Endothelial cell of umbilical vein (primary cell): ENCODE measurements at regions of chr17 and their contacts with region 1.

Region 1: DNA sequence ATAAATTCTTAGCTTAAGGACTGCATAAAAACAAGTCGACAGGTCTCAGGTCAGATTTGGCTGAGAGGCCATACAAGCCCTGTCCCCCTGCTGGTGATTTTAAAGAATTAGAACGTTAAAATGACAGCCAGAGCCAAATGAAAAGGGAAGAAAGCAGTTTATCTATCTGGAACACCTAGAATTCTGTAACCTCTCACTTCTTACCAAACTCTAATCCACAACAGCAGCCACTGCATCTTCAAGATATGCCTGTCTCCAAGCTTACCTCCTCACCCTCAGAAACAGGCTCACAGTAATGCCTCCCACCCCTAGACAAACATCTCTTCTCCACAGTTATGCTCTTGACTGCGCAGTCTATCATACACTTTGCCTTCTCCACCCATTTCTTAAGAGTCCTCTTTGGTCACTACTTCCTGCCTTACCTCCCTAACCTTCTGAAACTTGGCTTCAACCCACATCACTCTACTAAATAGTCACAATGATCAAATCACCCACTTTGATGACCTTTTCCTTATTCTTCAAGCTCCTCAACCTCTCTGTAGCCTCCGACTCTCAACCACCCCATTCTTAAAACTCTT is 14.2 kb downstream of the ANKFY1 start:
- DNase-seq: peak; percentile 26
- H3K4me3 ChIP-seq: no peak overlapping the region
- H3K27ac ChIP-seq: no peak overlapping the region
- H3K4me1 ChIP-seq: no peaks in the 10 kb centered on the region
- H3K27me3 ChIP-seq: no peaks in the 10 kb centered on the region
- CTCF ChIP-seq: peak; percentile 36 to 53
- POLR2A ChIP-seq: no peak

Region 2: GRCh38 chr17:4130715-4131114 is 118.8 kb before region 1 on chr17:
- CTCF ChIA-PET with region 1: no interaction called
- POLR2A ChIA-PET with region 1: no interaction called
- dilution Hi-C with region 1: no loop called
- intact Hi-C with region 1: no loop called
- DNase-seq: peak; percentile 56
- H3K4me3 ChIP-seq: no peak overlapping the region
- H3K27ac ChIP-seq: no peak overlapping the region
- H3K4me1 ChIP-seq: peaks cover 14% of the 10 kb centered on the region
- H3K27me3 ChIP-seq: no peaks in the 10 kb centered on the region
- CTCF ChIP-seq: no peak
- POLR2A ChIP-seq: peak; percentile 28

Region 3: DNA sequence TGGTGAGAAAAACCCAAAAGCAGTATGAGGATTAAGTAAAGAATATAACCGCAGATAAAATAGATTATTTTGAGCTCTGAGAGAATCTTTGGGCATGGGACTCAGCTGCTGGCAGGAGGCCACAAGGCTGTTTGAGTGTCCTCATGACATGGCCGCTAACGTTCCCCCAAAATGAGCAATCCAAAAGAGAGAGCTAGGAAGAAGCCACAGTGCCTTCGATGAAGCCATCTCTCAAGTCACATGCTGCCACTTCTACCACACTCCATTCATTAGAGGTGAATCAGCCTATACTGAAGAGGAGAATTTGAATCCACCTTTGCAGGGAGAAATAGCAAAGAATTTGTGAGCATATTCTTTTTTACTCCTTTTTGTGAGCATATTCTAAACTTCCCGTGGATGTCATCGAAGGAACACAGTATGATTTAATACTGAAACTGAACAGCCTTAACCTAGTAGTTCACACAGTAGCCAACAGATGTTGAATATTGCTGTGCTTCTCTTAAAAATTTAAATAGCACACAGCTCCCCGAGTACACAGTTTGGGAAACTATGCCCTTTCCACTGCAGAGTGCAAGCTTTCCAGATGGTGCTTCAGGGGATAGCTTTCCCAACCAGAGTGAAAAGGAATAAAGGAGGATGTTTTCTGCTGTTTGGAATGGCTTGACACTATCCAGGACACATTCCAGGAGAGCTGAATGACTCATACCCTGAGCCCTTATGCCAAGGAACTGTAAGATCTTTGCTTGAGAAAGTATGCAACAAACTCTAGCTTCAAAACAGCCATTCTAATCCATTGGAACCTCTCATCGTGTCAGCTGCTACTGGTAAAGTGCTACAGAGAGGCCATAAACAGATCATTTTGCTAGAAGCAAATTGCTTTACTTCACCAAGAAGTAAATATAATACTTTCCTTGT is 19.7 kb before region 1 on chr17:
- CTCF ChIA-PET with region 1: interaction called, 24 read pairs
- POLR2A ChIA-PET with region 1: no interaction called
- dilution Hi-C with region 1: no loop called
- intact Hi-C with region 1: no loop called
- DNase-seq: peak; percentile 93
- H3K4me3 ChIP-seq: no peak overlapping the region
- H3K27ac ChIP-seq: no peak overlapping the region
- H3K4me1 ChIP-seq: peaks cover 17% of the 10 kb centered on the region
- H3K27me3 ChIP-seq: no peaks in the 10 kb centered on the region
- CTCF ChIP-seq: no peak
- POLR2A ChIP-seq: no peak

Region 4: GRCh38 chr17:4263282-4264215 is 14.0 kb after region 1 on chr17 and contains the start of gene ANKFY1:
- CTCF ChIA-PET with region 1: interaction called, 21 read pairs
- POLR2A ChIA-PET with region 1: no interaction called
- dilution Hi-C with region 1: no loop called
- intact Hi-C with region 1: no loop called
- DNase-seq: peak; percentile 97
- H3K4me3 ChIP-seq: peak within 1 kb of the TSS; percentile 69 to 97 (median 70)
- H3K27ac ChIP-seq: peak within 1 kb of the TSS; percentile 72
- H3K4me1 ChIP-seq: peaks cover 16% of the 10 kb centered on the region
- H3K27me3 ChIP-seq: no peaks in the 10 kb centered on the region
- CTCF ChIP-seq: no peak
- POLR2A ChIP-seq: peak; percentile 70
- total RNA-seq, gene ANKFY1: 45.4 and 51.1 TPM in 2 replicates